Heart left ventricle (tissue), 16 donors: ENCODE measurements at regions of chr17 and their contacts with region 1.

Region 1: GRCh38 chr17:64648234-64648633 is 13.9 kb downstream of the SMURF2 start:
- DNase-seq: no peak
- ATAC-seq: no peak
- H3K4me3 ChIP-seq: no peak overlapping the region
- H3K27ac ChIP-seq: no peak overlapping the region
- H3K4me1 ChIP-seq: peaks cover 0 to 35% (median 1%) of the 10 kb centered on the region in 12 donors
- H3K27me3 ChIP-seq: no peaks in the 10 kb centered on the region
- CTCF ChIP-seq: no peak
- POLR2A ChIP-seq: no peak

Region 2: DNA sequence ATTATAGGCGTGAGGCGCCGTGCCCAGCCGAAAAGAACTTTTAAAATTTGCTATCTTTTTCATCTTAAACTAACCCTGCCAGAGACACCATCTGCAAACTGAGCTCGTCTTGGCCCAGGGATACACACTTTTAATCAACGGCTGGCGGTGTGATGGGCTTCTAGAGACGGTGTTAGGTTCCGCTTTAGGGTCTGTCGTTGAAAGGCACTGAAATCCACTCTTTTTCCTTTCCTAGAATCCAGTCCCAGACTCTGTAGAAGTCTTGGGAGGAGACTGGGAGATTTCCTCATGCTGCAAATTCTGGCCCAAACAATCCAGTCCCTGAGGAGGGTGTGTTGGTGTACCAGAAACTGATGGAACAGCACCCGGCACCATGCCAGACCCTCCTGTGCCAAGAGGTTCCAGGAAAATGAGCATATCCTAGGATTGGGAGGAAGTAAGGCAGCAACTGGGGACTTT is 333.2 kb before region 1 on chr17:
- intact Hi-C with region 1: loop called in 1 of 10 experiments (anchors 5 kb)
- DNase-seq: peak; percentile 89 to 93 (median 92)
- ATAC-seq: peak; percentile 92 to 97 (median 95)
- H3K4me3 ChIP-seq: no peak overlapping the region
- H3K27ac ChIP-seq: peak overlapping the region; percentile 17 to 84 (median 70)
- H3K4me1 ChIP-seq: peaks cover 0 to 39% (median 19%) of the 10 kb centered on the region in 12 donors
- H3K27me3 ChIP-seq: no peaks in the 10 kb centered on the region
- CTCF ChIP-seq: no peak
- POLR2A ChIP-seq: no peak

Region 3: GRCh38 chr17:64439956-64440355 is 208.3 kb before region 1 on chr17:
- intact Hi-C with region 1: loop called in 1 of 10 experiments (anchors 10 kb)
- DNase-seq: no peak
- ATAC-seq: no peak
- H3K4me3 ChIP-seq: no peak overlapping the region
- H3K27ac ChIP-seq: no peak overlapping the region
- H3K4me1 ChIP-seq: peaks cover 0 to 39% (median 2%) of the 10 kb centered on the region in 12 donors
- H3K27me3 ChIP-seq: no peaks in the 10 kb centered on the region
- CTCF ChIP-seq: no peak
- POLR2A ChIP-seq: no peak

Region 4: GRCh38 chr17:64534175-64534574 is 114.1 kb before region 1 on chr17:
- intact Hi-C with region 1: loop called in 1 of 10 experiments (anchors 10 kb)
- DNase-seq: no peak
- ATAC-seq: no peak
- H3K4me3 ChIP-seq: no peak overlapping the region
- H3K27ac ChIP-seq: no peak overlapping the region
- H3K4me1 ChIP-seq: peaks cover 0 to 7% (median 0%) of the 10 kb centered on the region in 12 donors
- H3K27me3 ChIP-seq: no peaks in the 10 kb centered on the region
- CTCF ChIP-seq: no peak
- POLR2A ChIP-seq: no peak

Region 5: DNA sequence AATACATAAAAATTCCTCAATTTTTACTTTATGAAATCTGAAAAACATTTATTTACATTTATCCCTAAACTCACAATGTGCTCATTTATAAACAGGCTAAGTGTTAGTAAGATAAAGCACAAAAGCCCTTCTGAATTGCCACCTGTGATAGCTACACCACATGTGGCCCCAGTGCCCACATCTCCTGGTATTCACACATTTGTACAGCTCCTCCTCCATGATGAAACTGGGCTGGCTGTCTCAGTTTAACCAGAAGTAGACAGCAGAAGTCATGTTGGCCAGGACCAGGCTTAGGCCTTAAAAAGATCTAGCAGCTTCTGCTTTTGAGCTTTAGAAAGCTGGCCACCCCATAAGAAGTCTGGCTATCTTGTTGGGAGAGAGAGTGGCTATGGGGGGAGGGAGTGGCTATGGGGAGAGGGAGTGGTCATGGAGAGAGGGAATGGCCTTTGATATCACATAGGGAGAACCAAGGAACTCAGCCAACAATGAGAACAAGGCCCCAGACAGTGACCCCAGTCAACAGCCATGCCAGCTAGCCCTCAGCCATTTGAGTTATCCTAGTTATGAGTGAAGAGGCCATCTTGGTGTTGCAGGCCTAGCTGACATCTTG is 94.1 kb before region 1 on chr17:
- intact Hi-C with region 1: loop called in 1 of 10 experiments (anchors 10 kb)
- DNase-seq: no peak
- ATAC-seq: no peak
- H3K4me3 ChIP-seq: no peak overlapping the region
- H3K27ac ChIP-seq: no peak overlapping the region
- H3K4me1 ChIP-seq: no peaks in the 10 kb centered on the region
- H3K27me3 ChIP-seq: no peaks in the 10 kb centered on the region
- CTCF ChIP-seq: no peak
- POLR2A ChIP-seq: no peak

Region 6: DNA sequence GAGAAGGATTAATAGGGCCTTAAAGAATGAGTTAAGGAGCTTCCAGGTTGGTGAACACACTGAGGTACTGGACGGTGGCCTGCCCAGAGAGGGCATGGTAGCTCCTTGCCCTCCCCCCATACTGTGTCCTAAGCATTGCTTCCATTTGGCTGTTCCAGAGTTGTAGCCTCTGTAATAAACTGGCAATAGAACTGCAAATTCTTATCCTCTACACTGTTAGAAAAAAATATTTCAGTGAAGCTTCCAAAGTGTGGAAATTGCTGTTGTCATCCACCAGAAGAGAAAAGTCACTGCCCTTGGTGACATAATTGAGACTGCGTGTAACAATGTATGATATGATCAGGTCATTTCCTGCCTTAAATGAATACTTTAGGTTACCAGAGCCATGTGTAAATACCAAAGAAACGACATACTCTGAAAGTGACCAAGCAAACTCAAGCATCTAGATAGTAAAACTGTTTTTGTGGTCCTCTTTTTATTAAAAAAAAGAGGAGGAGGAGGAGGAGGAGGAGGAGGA is 75.5 kb before region 1 on chr17:
- intact Hi-C with region 1: loop called in 1 of 10 experiments (anchors 5 kb)
- DNase-seq: no peak
- ATAC-seq: peak in 3 of 4 donors; percentile 14 to 70 (median 42)
- H3K4me3 ChIP-seq: no peak overlapping the region
- H3K27ac ChIP-seq: peak overlapping the region in 4 of 12 donors; percentile 2 to 51 (median 34)
- H3K4me1 ChIP-seq: peaks cover 0 to 12% (median 2%) of the 10 kb centered on the region in 12 donors
- H3K27me3 ChIP-seq: no peaks in the 10 kb centered on the region
- CTCF ChIP-seq: no peak
- POLR2A ChIP-seq: no peak

Region 7: DNA sequence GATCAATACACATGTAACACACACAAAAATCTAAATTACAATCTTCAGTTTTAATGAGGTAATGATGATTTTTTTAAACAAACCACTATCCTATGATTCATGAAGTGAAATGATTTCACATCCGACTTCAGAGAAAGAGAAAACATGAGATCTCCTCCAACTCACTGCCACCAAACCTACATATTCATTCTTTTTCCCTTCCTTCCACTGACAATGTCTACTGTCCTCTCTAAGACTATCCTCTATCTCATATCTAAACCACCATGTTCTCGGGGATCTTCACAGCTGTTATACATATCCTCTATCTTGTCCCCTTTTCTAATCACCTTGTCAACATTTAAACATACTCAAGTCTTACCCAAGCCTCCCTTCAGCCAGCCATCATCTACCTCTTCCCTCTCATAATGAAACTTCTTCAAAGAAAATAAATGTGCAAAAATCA is 39.7 kb before region 1 on chr17:
- intact Hi-C with region 1: no loop called
- DNase-seq: no peak
- ATAC-seq: no peak
- H3K4me3 ChIP-seq: no peak overlapping the region
- H3K27ac ChIP-seq: peak overlapping the region in 1 of 12 donors; percentile 11
- H3K4me1 ChIP-seq: peaks cover 0 to 38% (median 18%) of the 10 kb centered on the region in 12 donors
- H3K27me3 ChIP-seq: no peaks in the 10 kb centered on the region
- CTCF ChIP-seq: no peak
- POLR2A ChIP-seq: no peak

Region 8: GRCh38 chr17:64635647-64636307 is 12.5 kb before region 1 on chr17:
- intact Hi-C with region 1: no loop called
- DNase-seq: no peak
- ATAC-seq: no peak
- H3K4me3 ChIP-seq: no peak overlapping the region
- H3K27ac ChIP-seq: peak overlapping the region in 1 of 12 donors; percentile 12
- H3K4me1 ChIP-seq: peaks cover 0 to 49% (median 6%) of the 10 kb centered on the region in 12 donors
- H3K27me3 ChIP-seq: no peaks in the 10 kb centered on the region
- CTCF ChIP-seq: no peak
- POLR2A ChIP-seq: no peak

Region 9: DNA sequence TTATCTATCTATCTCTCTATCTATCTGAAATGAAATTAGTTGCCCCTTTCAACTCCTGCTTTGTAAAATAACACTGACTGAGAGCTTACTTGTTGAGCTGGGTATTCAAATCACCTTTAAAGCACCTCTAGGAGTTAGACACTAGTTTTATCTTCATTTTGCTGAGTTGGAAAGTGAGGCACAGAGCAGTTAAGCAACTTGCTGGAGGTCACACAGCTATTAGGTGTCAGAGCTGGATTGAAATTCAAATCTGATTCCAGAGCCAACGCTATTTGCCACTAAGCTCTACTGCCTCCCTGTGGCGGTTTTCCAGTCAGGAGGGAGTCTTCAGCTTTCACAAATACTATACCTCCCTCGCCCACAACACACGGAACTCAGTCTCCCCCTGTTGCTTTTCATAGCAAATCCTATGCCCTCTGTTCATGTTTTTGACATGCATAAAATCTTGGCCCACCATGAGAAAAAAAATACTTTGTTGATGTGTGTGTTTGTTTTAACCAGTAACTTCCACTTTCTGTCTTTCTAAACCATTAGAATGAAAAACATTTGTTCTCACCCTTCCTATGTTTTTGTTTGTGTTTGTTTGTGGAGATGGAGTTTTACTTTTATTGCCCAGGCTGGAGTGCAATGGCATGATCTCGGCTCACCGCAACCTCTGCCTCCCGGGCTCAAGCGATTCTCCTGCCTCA is 88.7 kb after region 1 on chr17:
- intact Hi-C with region 1: loop called in 2 of 10 experiments (anchors 10 kb)
- DNase-seq: peak in 1 of 5 donors; percentile 19
- ATAC-seq: peak in 1 of 4 donors; percentile 33
- H3K4me3 ChIP-seq: no peak overlapping the region
- H3K27ac ChIP-seq: no peak overlapping the region
- H3K4me1 ChIP-seq: peaks cover 0 to 47% (median 23%) of the 10 kb centered on the region in 12 donors
- H3K27me3 ChIP-seq: no peaks in the 10 kb centered on the region
- CTCF ChIP-seq: peak; percentile 32 to 65 (median 55)
- POLR2A ChIP-seq: no peak